ENCODE measurements at regions of chr18 and their contacts with region 1.

Region 1: GRCh38 chr18:46657115-46657955 is at the start of gene LOXHD1:
- DNase-seq: no peak
- H3K4me3 ChIP-seq: no peak within 1 kb of the TSS
- H3K27ac ChIP-seq: no peak within 1 kb of the TSS
- H3K4me1 ChIP-seq: no peaks in the 10 kb centered on the region
- H3K27me3 ChIP-seq: peaks cover 0 to 4% (median 0%) of the 10 kb centered on the region in 4 donors
- CTCF ChIP-seq: no peak
- POLR2A ChIP-seq: no peak
- total RNA-seq, gene LOXHD1: 0.19 TPM in 1 of 4 donors, not detected in the others

Region 2: DNA sequence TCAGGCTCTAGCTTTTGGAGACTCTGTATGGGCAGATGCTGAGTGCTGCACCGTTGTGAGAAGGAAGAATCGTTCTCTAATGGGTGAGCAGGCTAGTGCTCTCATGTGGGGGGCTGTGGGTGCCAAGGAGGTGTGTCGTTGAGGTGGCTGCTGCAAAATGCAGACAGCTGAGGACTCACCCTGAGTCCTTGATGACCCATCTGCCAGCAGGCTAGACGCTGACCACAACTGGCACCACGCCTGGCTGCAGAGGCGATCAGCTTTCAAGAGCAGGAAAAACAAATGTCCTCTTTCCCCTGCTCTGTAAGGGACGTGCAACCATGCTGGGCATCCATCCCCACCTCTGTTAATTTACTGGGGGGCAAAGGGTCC is 504.9 kb before region 1 on chr18:
- intact Hi-C with region 1: loop called (anchors 5 kb)
- DNase-seq: no peak
- H3K4me3 ChIP-seq: no peak overlapping the region
- H3K27ac ChIP-seq: peak overlapping the region in 2 of 4 donors; percentile 6 to 51
- H3K4me1 ChIP-seq: peaks cover 3 to 27% (median 11%) of the 10 kb centered on the region in 3 donors
- H3K27me3 ChIP-seq: no peaks in the 10 kb centered on the region
- CTCF ChIP-seq: no peak
- POLR2A ChIP-seq: no peak

Measured in esophagus squamous epithelium (tissue), 5 donors.